IMR-90 (cell line): ENCODE measurements at regions of chr15 and their contacts with region 1.

Region 1: GRCh38 chr15:32994810-32995424 is 199.6 kb downstream of the FMN1 start:
- DNase-seq: peak; percentile 74
- ATAC-seq: peak; percentile 79
- H3K4me3 ChIP-seq: no peak overlapping the region
- H3K27ac ChIP-seq: peak overlapping the region; percentile 92; the same call in 1 of the 2 replicates
- H3K4me1 ChIP-seq: peaks cover 12% of the 10 kb centered on the region
- H3K27me3 ChIP-seq: no peaks in the 10 kb centered on the region
- CTCF ChIP-seq: peak; percentile 76
- POLR2A ChIP-seq: no peak
- RAD21 ChIP-seq: peak; percentile 76

Region 2: DNA sequence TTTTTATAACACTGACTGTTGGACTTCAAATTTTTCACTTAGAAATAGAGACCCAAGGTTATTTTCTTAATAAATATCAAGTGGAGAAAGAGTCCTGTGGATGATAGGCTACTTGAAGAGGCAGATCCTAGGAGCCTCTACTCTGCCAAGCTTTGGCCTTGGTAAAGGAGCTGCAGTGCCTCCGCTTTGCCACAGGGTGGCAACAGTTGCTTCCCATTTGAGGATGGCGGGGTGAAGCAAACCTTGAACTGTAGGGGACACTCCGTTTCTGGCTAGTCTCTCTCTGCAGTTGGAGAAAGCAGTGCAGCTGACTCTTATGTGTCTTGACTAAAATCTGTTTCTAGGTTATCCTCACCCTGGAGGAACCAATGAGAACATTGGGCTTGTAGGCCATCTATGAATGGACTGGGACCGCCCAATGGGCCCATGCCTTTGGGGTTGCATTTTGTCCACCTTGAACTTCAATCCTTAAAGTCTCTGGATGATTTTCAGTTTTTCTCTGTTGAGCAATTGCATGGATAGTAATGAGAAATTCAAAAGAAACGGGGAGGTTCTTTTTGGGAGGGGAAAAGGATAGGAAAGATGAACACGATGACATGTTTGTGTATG is 343.6 kb before region 1 on chr15:
- CTCF ChIA-PET with region 1: interaction called, 17 read pairs
- POLR2A ChIA-PET with region 1: no interaction called
- dilution Hi-C with region 1: no loop called
- in situ Hi-C with region 1: no loop called
- intact Hi-C with region 1: no loop called
- DNase-seq: peak; percentile 73
- ATAC-seq: peak; percentile 97
- H3K4me3 ChIP-seq: no peak overlapping the region
- H3K27ac ChIP-seq: no peak overlapping the region
- H3K4me1 ChIP-seq: peaks cover 4% of the 10 kb centered on the region; the same call in 1 of the 2 replicates
- H3K27me3 ChIP-seq: no peaks in the 10 kb centered on the region
- CTCF ChIP-seq: peak; percentile 92
- POLR2A ChIP-seq: no peak
- RAD21 ChIP-seq: peak; percentile 91

Region 3: GRCh38 chr15:32664796-32665195 is 330.1 kb before region 1 on chr15:
- CTCF ChIA-PET with region 1: interaction called, 29 read pairs
- POLR2A ChIA-PET with region 1: no interaction called
- dilution Hi-C with region 1: no loop called
- in situ Hi-C with region 1: loop called (anchors 5 kb)
- intact Hi-C with region 1: loop called (anchors 1 kb)
- DNase-seq: no peak
- ATAC-seq: no peak
- H3K4me3 ChIP-seq: no peak overlapping the region
- H3K27ac ChIP-seq: no peak overlapping the region
- H3K4me1 ChIP-seq: peaks cover 11% of the 10 kb centered on the region
- H3K27me3 ChIP-seq: no peaks in the 10 kb centered on the region
- CTCF ChIP-seq: no peak
- POLR2A ChIP-seq: no peak
- RAD21 ChIP-seq: no peak

Region 4: GRCh38 chr15:32739522-32740063 is 255.3 kb before region 1 on chr15:
- CTCF ChIA-PET with region 1: no interaction called
- POLR2A ChIA-PET with region 1: no interaction called
- dilution Hi-C with region 1: no loop called
- in situ Hi-C with region 1: no loop called
- intact Hi-C with region 1: loop called (anchors 2 kb)
- DNase-seq: no peak
- ATAC-seq: no peak
- H3K4me3 ChIP-seq: no peak overlapping the region
- H3K27ac ChIP-seq: no peak overlapping the region; the same call in 1 of the 2 replicates
- H3K4me1 ChIP-seq: no peaks in the 10 kb centered on the region
- H3K27me3 ChIP-seq: no peaks in the 10 kb centered on the region
- CTCF ChIP-seq: no peak
- POLR2A ChIP-seq: peak; percentile 55
- RAD21 ChIP-seq: no peak

Region 5: DNA sequence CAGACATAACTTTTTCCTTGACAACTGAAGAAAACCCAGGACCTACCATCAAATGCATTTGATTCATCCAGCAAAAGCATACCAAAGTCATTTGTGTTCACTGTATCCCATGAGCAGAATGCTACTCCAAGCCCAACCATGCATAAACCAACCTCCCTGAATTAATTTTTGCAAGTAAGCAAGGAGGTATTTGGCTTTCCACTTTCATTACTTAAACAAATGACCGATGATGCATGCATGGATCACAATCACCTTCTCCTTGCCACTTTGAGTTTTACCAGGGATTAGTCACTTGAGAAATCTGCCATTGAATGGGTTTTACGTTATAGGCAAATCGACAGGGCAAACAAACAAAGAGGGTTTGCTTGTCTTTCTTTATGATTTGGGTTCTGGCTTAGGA is 15.2 kb before region 1 on chr15:
- CTCF ChIA-PET with region 1: interaction called, 7 read pairs
- POLR2A ChIA-PET with region 1: interaction called, 16 read pairs
- dilution Hi-C with region 1: no loop called
- in situ Hi-C with region 1: no loop called
- intact Hi-C with region 1: no loop called
- DNase-seq: peak; percentile 98
- ATAC-seq: peak; percentile 91
- H3K4me3 ChIP-seq: no peak overlapping the region
- H3K27ac ChIP-seq: peak overlapping the region; percentile 70; the same call in 1 of the 2 replicates
- H3K4me1 ChIP-seq: peaks cover 16% of the 10 kb centered on the region
- H3K27me3 ChIP-seq: no peaks in the 10 kb centered on the region
- CTCF ChIP-seq: no peak
- POLR2A ChIP-seq: no peak
- RAD21 ChIP-seq: no peak